ENCODE measurements at regions of chr1 and their contacts with region 1.

Region 1: GRCh38 chr1:58783993-58784757 is at the start of gene JUN:
- DNase-seq: peak; percentile 97 to 100 (median 99)

Region 2: GRCh38 chr1:58679463-58679862 is 104.7 kb before region 1 on chr1:
- intact Hi-C with region 1: no loop called
- DNase-seq: no peak

Region 3: DNA sequence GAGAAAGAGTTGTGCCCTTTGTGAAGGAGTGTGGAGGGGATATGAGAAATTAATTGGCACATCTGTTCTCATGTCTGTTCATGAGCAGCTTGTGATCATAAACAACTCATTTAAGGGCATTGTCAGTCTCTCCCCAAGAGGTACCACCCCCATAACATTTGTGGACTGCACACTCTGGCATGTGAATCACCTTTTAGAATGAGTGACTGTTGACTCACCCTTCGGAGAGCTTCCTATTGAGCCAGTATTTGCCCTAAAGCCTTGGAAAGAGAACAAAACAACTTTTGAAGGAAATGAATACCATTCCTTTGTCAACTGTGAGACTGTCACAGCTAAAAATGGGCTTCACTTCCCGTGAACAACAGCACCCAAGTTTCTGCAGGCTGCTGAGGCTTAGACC is 56.8 kb before region 1 on chr1:
- intact Hi-C with region 1: no loop called
- DNase-seq: no peak

Region 4: DNA sequence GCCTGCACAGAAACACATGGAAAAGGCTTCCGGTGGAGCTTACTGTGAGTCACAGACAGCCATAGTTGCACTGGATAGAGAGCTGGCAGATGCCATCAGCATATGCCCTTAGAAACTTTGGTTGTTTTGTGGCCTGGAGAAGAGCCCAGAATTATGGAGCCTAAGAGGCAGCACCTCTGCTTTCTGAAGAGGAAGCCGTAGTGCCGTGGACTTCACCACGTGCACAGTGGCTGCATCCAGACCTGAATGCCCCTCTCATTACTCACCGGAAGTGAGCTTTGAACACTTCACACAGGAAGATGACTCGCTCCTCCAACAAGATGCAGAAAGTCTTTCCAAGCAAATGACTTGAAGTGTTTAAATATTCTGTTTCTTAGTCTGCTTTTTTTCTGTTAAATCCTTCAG is 28.7 kb before region 1 on chr1:
- intact Hi-C with region 1: no loop called
- DNase-seq: peak in 24 of 42 donors; percentile 4 to 66 (median 20)

Region 5: DNA sequence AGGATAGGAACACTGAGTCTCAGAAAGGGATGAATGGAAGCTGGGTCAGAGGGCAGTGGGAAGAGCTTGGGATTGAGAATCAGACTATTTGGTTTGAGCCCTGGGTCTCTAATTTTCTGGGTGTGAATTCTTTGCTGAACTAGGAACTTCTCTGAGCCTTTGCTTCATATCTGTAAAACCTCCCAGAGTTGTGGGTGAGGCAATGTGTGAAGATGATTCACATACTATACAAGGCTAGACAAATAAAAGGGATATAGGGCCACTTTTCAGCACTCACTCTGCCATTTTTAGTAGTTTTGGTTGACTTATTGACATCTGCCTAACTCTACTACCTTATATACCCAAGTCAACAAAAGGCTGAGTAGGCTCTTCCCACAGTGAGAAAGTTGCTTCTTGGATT is 77.3 kb after region 1 on chr1:
- intact Hi-C with region 1: loop called (anchors 10 kb)
- DNase-seq: no peak

Region 6: GRCh38 chr1:58903514-58904298 is 119.5 kb after region 1 on chr1:
- intact Hi-C with region 1: loop called (anchors 2 kb)
- DNase-seq: peak; percentile 71 to 94 (median 86)

Region 7: GRCh38 chr1:59146651-59147358 is 362.6 kb after region 1 on chr1:
- intact Hi-C with region 1: no loop called
- DNase-seq: peak in 32 of 42 donors; percentile 9 to 58 (median 26)

Region 8: DNA sequence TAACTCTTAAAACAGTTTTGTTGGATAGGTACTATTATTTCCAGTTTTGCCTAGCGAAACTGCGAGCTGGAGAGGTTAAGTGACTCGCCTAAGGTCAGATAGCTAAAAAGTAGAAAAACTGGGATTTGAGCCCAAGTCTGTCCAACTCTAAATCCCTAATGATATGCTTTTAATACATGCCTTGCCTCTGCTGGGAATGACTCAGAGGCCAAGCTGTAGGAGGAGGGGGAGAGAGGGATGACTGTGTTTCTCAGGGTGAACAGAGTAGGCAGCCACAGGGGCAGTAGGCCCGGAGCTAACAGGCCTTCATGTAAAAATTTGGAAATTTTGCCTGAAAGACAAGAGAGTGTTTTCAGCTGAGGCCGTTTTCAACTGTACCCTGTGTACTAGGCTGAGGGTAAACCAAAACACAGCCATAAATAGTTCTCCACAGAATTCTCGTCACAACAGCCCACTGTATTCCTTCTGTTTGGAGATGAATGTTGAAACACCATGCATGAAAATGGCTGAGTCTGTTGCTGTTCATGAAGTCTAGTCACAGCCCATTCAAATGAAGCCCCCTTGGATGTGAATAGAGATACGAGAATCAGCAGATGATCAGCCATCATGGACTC is 923.1 kb after region 1 on chr1:
- intact Hi-C with region 1: loop called (anchors 10 kb)
- DNase-seq: peak in 30 of 42 donors; percentile 12 to 84 (median 43)